Posterior vena cava (tissue), 2 donors: ENCODE measurements at regions of chr3 and their contacts with region 1.

Region 1: DNA sequence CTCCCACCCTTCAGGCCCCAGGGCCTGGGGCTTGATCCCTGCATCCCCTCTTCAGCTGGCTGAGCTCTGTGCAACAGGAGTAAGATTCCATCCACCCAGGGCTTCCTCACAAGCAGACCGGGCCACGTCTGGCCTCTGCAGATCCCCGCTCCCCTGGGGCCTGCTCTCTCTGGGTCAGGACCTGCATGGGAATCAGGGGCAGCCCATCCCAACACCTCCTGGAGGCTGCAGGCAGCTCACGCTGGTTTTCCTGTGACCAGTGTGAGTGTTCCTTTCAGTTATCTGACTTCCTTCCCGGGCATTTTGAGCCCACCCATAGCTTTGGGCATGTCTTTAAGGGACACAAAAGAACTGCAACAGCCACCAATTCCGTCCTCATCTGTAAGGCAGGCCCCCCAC is 16.3 kb downstream of the NUP210 start:
- DNase-seq: no peak

Region 2: GRCh38 chr3:13364602-13365271 is 39.1 kb before region 1 on chr3:
- intact Hi-C with region 1: loop called in 1 of 2 experiments (anchors 1 kb)
- DNase-seq: no peak

Region 3: GRCh38 chr3:13452490-13453335 is 48.9 kb after region 1 on chr3:
- intact Hi-C with region 1: no loop called
- DNase-seq: no peak